Activated CD8-positive, alpha-beta memory T cell treated with anti-CD3 and anti-CD28 coated beads, Interleukin-2, amount 10 ng/mL, durations not matched to agents 7 days and 5 days (primary cell): ENCODE measurements at regions of chr11 and their contacts with region 1.

Region 1: DNA sequence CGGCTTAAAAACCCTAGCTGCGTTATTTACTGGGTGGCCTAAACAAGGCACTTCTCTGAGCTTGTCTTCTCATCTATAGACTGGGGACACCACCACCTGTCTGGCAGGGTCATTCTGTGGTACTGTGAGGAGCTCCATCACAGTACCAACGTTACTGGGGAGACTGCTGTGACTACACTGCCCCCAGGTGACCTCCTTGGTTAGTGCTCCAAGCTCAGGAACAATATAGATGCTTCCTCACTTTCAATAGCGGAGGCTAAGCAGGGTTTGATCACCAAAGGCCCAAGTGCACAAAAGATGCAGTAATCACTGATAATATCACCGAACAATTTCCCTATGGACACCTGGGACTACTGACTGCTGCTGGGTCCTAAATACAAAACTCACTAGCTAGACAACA is 18.8 kb downstream of the PRPF19 start:
- DNase-seq: peak; percentile 75
- ATAC-seq: peak; percentile 98
- H3K4me3 Mint-ChIP-seq: no peak overlapping the region
- H3K27ac Mint-ChIP-seq: no peak overlapping the region
- H3K4me1 Mint-ChIP-seq: peaks cover 3% of the 10 kb centered on the region
- H3K27me3 Mint-ChIP-seq: no peaks in the 10 kb centered on the region

Region 2: DNA sequence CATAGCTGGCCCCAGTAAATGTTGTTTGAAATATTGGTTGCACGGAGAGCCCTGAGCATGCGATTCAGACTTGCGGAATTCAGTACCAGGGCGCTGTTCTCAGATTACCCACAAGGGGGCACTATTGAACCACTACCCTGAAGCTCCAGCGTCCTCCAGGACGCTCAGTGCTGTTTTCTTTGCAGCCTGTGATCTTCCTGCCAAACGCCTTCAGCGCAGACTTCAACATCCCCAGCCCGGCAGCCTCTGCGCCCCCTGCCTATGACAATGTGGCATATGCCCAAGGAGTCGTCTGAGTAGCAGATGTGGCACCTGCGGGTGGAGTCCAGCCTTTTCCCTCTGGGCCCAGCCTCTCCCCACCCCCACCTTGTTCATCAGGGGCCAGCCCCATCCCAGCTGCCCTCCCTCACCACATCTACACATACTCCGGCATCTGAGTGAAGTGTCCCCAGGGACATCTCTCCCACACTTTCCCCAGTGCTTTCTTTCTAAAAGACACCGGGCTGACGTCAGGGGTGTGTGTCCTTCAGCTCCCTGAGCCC is 112.1 kb before region 1 on chr11:
- CTCF ChIA-PET with region 1: interaction called, 46 read pairs
- DNase-seq: peak; percentile 87
- ATAC-seq: peak; percentile 88
- H3K4me3 Mint-ChIP-seq: no peak overlapping the region
- H3K27ac Mint-ChIP-seq: no peak overlapping the region
- H3K4me1 Mint-ChIP-seq: peaks cover 5% of the 10 kb centered on the region
- H3K27me3 Mint-ChIP-seq: peaks cover 10% of the 10 kb centered on the region

Region 3: GRCh38 chr11:60831143-60831500 is 56.4 kb before region 1 on chr11:
- CTCF ChIA-PET with region 1: interaction called, 426 read pairs
- DNase-seq: peak; percentile 87
- ATAC-seq: peak; percentile 91
- H3K4me3 Mint-ChIP-seq: no peak overlapping the region
- H3K27ac Mint-ChIP-seq: no peak overlapping the region
- H3K4me1 Mint-ChIP-seq: peaks cover 33% of the 10 kb centered on the region
- H3K27me3 Mint-ChIP-seq: peaks cover 17% of the 10 kb centered on the region

Region 4: DNA sequence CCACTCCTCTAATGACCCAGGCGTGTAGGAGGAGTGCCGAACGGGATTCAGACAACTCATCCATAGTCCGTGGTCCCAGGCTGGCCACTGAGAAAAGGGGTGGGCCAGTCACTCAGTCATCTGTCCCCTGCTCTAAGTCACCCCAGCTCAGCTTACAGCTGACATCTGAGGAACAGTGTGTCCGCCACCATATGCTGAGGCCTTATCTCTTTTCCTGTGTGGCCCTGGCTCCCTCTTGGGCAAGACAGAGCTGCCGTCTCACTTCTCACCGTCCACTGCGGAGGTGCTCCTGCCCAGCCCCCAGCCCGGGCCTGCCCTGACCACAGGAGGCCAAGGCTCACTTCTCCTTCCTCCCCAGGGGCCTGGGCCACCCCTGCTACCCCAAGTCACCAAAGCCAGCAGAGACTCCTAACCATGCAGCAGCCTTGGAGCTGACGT is 38.8 kb before region 1 on chr11:
- CTCF ChIA-PET with region 1: interaction called, 10 read pairs
- DNase-seq: no peak
- ATAC-seq: no peak
- H3K4me3 Mint-ChIP-seq: no peak overlapping the region
- H3K27ac Mint-ChIP-seq: no peak overlapping the region
- H3K4me1 Mint-ChIP-seq: peaks cover 18% of the 10 kb centered on the region
- H3K27me3 Mint-ChIP-seq: no peaks in the 10 kb centered on the region

Region 5: GRCh38 chr11:60866911-60867870 is 20.4 kb before region 1 on chr11 and contains the start of gene ZP1:
- CTCF ChIA-PET with region 1: interaction called, 39 read pairs
- DNase-seq: no peak
- ATAC-seq: no peak
- H3K4me3 Mint-ChIP-seq: peak within 1 kb of the TSS; percentile 20
- H3K27ac Mint-ChIP-seq: peak within 1 kb of the TSS; percentile 82
- H3K4me1 Mint-ChIP-seq: peaks cover 76% of the 10 kb centered on the region
- H3K27me3 Mint-ChIP-seq: no peaks in the 10 kb centered on the region
- total RNA-seq, gene ZP1: not detected

Region 6: GRCh38 chr11:60899046-60899936 is 11.7 kb after region 1 on chr11:
- CTCF ChIA-PET with region 1: interaction called, 27 read pairs
- DNase-seq: no peak
- ATAC-seq: peak; percentile 76
- H3K4me3 Mint-ChIP-seq: no peak overlapping the region
- H3K27ac Mint-ChIP-seq: peak overlapping the region; percentile 33
- H3K4me1 Mint-ChIP-seq: peaks cover 13% of the 10 kb centered on the region
- H3K27me3 Mint-ChIP-seq: no peaks in the 10 kb centered on the region

Region 7: GRCh38 chr11:61007591-61008478 is 120.3 kb after region 1 on chr11:
- CTCF ChIA-PET with region 1: no interaction called
- DNase-seq: no peak
- ATAC-seq: no peak
- H3K4me3 Mint-ChIP-seq: no peak overlapping the region
- H3K27ac Mint-ChIP-seq: no peak overlapping the region
- H3K4me1 Mint-ChIP-seq: peaks cover 41% of the 10 kb centered on the region
- H3K27me3 Mint-ChIP-seq: no peaks in the 10 kb centered on the region